Sigmoid colon (tissue), 7 donors: ENCODE measurements at regions of chr6 and their contacts with region 1.

Region 1: GRCh38 chr6:108260809-108261569 is at the start of gene SNX3:
- DNase-seq: peak; percentile 98
- H3K4me3 ChIP-seq: peak within 1 kb of the TSS; percentile 81 to 98 (median 91)
- H3K27ac ChIP-seq: peak within 1 kb of the TSS; percentile 93 to 96 (median 94)
- H3K4me1 ChIP-seq: peaks cover 3 to 37% (median 30%) of the 10 kb centered on the region in 4 donors
- H3K27me3 ChIP-seq: no peaks in the 10 kb centered on the region
- CTCF ChIP-seq: no peak
- EP300 ChIP-seq: peak in 2 of 4 donors; percentile 3 to 74
- POLR2A ChIP-seq: peak; percentile 12 to 60
- total RNA-seq, gene SNX3: 160 to 221 (median 217) TPM

Region 2: DNA sequence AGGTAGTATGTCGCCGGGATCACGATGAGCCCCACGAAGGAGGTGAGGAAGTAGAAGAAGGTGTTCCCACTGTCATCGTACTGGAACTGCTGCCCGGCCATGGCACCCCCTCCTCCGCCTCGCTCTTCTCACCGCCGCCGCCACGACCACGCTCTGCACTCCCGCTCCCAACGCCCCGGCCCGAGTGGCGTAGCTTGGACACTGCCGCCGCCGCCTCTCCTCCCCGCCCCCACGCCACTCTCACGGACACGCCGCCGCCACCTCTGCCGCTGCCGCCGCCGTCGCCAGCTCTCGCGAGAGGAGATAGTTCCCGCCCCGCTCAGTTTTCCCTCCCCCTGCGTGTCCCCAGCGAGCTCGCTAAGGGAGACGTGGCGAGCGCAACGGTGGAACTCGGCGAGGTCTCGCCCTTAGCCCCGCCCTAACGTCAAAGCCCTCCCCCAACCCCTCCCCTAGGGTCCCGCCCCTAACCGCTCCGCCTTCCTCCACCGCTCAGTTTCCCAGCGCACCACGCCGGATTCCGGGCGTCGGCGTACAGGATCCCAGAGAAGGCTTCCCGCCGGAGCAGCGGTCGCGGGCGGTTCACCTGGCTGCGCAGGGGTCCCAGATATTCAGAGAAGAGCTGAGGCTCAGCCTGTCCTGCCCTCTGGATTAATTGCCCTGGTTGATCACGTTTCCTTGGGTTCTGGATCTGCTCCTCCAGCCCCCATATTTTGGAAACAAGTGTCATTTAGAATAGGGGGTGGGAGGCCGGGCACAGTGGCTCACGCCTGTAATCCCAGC is 302.9 kb before region 1 on chr6 and contains the start of gene SEC63:
- intact Hi-C with region 1: loop called (anchors 2 kb)
- DNase-seq: peak; percentile 98
- H3K4me3 ChIP-seq: peak within 1 kb of the TSS; percentile 79 to 92 (median 90)
- H3K27ac ChIP-seq: peak within 1 kb of the TSS; percentile 87 to 95 (median 92)
- H3K4me1 ChIP-seq: peaks cover 0 to 32% (median 30%) of the 10 kb centered on the region in 4 donors
- H3K27me3 ChIP-seq: no peaks in the 10 kb centered on the region
- CTCF ChIP-seq: no peak
- EP300 ChIP-seq: no peak
- POLR2A ChIP-seq: peak; percentile 86 to 87
- total RNA-seq, gene SEC63: 31.7 to 44.9 (median 33.9) TPM

Region 3: DNA sequence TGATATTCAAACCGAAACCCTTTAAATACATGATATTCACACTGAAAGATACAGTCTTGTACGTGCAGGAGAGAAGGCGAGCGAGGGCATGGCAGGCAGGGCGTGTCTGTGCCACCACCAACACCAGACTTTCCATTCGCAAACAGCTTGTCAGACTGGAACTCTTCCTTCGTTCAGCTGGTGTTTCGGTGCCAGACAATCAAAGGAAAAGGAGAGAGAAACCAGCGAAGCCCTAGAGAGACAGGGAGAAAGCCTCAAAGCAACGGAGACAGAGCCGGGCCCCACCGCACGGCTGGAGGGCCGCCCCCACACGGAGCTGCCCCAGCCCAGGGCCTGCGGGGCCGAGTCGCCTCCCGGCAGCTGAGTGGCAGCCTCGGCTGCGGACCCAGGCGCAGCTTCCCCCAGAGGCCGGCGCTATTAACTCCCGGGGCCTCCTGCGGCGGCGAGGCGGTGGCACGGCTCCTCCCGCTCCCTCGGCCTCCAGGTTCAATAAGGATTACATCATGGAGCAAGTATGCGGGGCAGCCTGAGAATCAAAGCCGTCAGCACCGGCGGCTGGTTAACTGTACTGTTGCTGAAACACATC is 127.3 kb before region 1 on chr6:
- intact Hi-C with region 1: loop called (anchors 10 kb)
- DNase-seq: peak; percentile 75
- H3K4me3 ChIP-seq: peak overlapping the region; percentile 20 to 54 (median 50)
- H3K27ac ChIP-seq: peak overlapping the region; percentile 58 to 83 (median 74)
- H3K4me1 ChIP-seq: peaks cover 0 to 15% (median 13%) of the 10 kb centered on the region in 4 donors
- H3K27me3 ChIP-seq: peaks cover 0 to 19% (median 4%) of the 10 kb centered on the region in 3 donors
- CTCF ChIP-seq: no peak
- EP300 ChIP-seq: no peak
- POLR2A ChIP-seq: no peak

Region 4: GRCh38 chr6:108294727-108295625 is 34.0 kb after region 1 on chr6 and contains the start of gene AFG1L:
- intact Hi-C with region 1: loop called (anchors 1 kb)
- DNase-seq: peak; percentile 94
- H3K4me3 ChIP-seq: peak within 1 kb of the TSS; percentile 62 to 80 (median 74)
- H3K27ac ChIP-seq: peak within 1 kb of the TSS; percentile 82 to 88 (median 87)
- H3K4me1 ChIP-seq: peaks cover 0 to 9% (median 7%) of the 10 kb centered on the region in 4 donors
- H3K27me3 ChIP-seq: no peaks in the 10 kb centered on the region
- CTCF ChIP-seq: no peak
- EP300 ChIP-seq: peak in 1 of 4 donors; percentile 6
- POLR2A ChIP-seq: peak; percentile 41 to 67
- total RNA-seq, gene AFG1L: 2.8 to 6.9 (median 3.5) TPM

Region 5: GRCh38 chr6:109095027-109095834 is 834.2 kb after region 1 on chr6 and contains the start of gene CEP57L1:
- intact Hi-C with region 1: loop called (anchors 10 kb)
- DNase-seq: peak; percentile 99
- H3K4me3 ChIP-seq: peak within 1 kb of the TSS; percentile 71 to 77 (median 74)
- H3K27ac ChIP-seq: peak within 1 kb of the TSS; percentile 97 to 99 (median 98)
- H3K4me1 ChIP-seq: peaks cover 0 to 38% (median 26%) of the 10 kb centered on the region in 4 donors
- H3K27me3 ChIP-seq: no peaks in the 10 kb centered on the region
- CTCF ChIP-seq: no peak
- EP300 ChIP-seq: peak in 1 of 4 donors; percentile 19
- POLR2A ChIP-seq: peak; percentile 23 to 65
- total RNA-seq, gene CEP57L1: 12.6 to 21.0 (median 16.5) TPM